ENCODE measurements at regions of chr2 and their contacts with region 1.

Region 1: DNA sequence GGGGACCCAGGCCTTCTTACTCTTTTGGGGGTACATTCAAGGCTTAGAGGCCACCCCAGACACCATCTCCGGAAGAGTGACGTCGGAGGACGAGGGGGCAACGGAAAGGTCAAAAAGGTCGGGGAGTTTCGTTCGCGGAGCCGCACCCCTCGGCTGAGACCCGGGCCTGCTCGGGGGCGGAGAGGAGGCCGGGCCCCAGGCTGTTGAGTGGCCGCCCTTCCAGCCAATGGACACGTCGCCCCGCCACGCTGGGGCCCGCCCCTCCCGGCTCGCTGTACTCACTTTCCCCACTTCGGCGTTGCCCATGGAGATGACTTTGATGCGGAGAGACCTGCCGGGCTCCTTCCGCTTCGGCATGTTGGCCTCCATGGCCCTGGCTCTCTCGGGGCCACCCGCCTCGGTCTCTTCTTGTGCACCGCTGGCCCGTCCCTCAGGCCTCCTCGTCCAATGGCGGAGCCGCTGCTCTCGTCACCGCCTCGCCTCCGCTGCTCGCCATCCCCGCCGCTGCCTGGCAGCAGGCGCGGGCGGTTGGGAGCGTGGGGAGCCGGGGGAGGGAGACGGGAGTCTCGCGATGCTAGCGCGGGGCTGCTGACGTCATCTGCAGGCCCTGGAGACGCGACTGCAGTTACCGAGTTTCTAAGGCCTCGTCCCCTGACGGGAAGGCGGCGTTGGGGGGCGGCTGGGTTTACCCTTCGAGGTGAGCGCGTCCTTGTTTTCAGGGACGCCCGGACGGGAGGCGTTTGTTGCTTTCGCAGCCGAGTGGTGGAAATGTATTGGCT is at the start of gene DNAJC27:
- DNase-seq: peak; percentile 98
- ATAC-seq: peak; percentile 94
- H3K4me3 Mint-ChIP-seq: peak within 1 kb of the TSS; percentile 98
- H3K27ac Mint-ChIP-seq: peak within 1 kb of the TSS; percentile 100
- H3K4me1 Mint-ChIP-seq: peaks cover 19% of the 10 kb centered on the region
- H3K27me3 Mint-ChIP-seq: no peaks in the 10 kb centered on the region
- total RNA-seq, gene DNAJC27: 6.5 to 8.0 TPM

Region 2: DNA sequence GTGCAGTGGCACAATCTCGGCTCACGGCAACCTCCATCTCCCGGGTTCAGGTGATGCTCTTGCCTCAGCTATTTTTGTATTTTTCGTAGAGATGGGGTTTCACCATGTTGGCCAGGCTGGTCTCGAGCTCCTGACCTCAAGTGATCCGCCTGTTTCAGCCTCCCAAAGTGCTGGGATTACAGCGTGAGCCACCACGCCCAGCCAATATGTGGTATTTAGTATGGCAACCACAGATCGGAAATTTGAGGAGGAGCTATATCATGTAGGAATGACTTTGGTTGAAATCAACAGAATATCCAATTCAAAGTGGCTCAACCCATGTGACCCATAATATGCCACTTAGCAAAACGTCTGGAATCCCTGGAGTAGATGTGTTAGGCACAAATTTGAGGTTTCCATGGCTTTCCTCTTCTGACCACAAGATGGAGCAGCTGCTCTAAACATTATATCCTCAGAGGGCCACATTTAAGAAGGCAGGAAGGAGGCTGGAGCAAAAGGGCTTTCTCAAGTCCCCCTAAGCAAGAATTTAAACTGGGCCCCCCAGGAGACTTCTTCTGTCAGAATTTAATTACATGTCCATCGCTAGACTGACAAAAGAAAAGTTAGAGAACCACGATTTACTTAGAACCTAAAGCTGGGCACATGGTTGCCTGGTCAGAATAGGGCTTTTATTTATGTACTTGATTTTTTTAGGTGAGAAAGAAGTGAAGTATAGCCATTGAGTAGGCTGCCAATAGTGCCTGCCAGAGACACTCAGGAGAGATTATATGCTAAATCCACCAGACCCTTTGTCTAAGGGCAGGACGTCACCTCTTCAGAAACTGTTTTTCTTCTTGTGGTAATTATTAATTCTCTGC is 561.8 kb before region 1 on chr2:
- CTCF ChIA-PET with region 1: interaction called, 13 read pairs
- POLR2A ChIA-PET with region 1: no interaction called
- DNase-seq: peak; percentile 60
- ATAC-seq: peak; percentile 84
- H3K4me3 Mint-ChIP-seq: no peak overlapping the region
- H3K27ac Mint-ChIP-seq: no peak overlapping the region
- H3K4me1 Mint-ChIP-seq: no peaks in the 10 kb centered on the region
- H3K27me3 Mint-ChIP-seq: peaks cover 3% of the 10 kb centered on the region

Region 3: GRCh38 chr2:24984912-24985311 is 13.2 kb after region 1 on chr2:
- CTCF ChIA-PET with region 1: interaction called, 13 read pairs
- POLR2A ChIA-PET with region 1: no interaction called
- DNase-seq: no peak
- ATAC-seq: no peak
- H3K4me3 Mint-ChIP-seq: no peak overlapping the region
- H3K27ac Mint-ChIP-seq: no peak overlapping the region
- H3K4me1 Mint-ChIP-seq: no peaks in the 10 kb centered on the region
- H3K27me3 Mint-ChIP-seq: peaks cover 13% of the 10 kb centered on the region

Region 4: DNA sequence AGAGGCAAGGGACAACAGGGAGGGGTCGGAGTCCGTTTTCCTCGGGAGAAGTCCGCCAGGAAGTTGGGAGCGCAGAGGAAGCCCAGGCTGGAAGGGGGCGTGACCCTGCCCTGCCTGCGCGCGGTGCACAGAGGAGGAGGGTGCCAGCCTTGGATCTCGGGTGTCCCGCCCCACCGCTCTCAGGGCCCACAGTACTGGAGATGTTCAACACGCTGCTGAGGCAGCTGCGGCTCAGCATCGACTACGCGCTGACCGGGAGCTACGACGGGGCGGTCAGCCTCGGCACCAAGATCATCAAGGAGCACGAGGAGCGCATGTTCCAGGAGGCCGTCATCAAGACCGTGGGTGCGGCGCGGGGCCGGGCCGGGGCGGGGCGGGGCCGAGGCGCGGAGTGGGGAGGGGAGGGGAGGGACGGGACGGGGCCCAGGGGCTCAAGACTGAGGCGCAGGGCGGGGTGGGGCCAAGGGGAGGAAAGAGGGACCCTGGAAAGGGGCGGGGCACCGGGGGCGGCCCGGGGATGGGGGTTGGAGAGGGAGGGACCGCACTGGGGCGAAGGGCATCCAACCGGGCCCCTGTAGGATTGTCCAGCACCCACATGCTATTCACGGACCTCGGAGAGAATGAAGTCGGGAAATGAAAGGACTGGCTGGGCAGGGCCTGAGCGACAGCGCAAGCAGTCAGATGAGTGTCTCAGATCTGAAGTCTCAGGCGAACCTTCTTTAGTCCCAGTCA is 160.0 kb after region 1 on chr2:
- CTCF ChIA-PET with region 1: interaction called, 180 read pairs
- POLR2A ChIA-PET with region 1: interaction called, 7 read pairs
- DNase-seq: no peak
- ATAC-seq: peak; percentile 29
- H3K4me3 Mint-ChIP-seq: peak overlapping the region; percentile 44
- H3K27ac Mint-ChIP-seq: no peak overlapping the region
- H3K4me1 Mint-ChIP-seq: peaks cover 7% of the 10 kb centered on the region
- H3K27me3 Mint-ChIP-seq: peaks cover 52% of the 10 kb centered on the region

Region 5: GRCh38 chr2:25165992-25166875 is 194.5 kb after region 1 on chr2:
- CTCF ChIA-PET with region 1: interaction called, 17 read pairs
- POLR2A ChIA-PET with region 1: interaction called, 3 read pairs
- DNase-seq: peak; percentile 70
- ATAC-seq: peak; percentile 68
- H3K4me3 Mint-ChIP-seq: no peak overlapping the region
- H3K27ac Mint-ChIP-seq: no peak overlapping the region
- H3K4me1 Mint-ChIP-seq: peaks cover 27% of the 10 kb centered on the region
- H3K27me3 Mint-ChIP-seq: peaks cover 47% of the 10 kb centered on the region

Region 6: GRCh38 chr2:25197336-25198208 is 225.8 kb after region 1 on chr2:
- CTCF ChIA-PET with region 1: interaction called, 39 read pairs
- POLR2A ChIA-PET with region 1: no interaction called
- DNase-seq: no peak
- ATAC-seq: no peak
- H3K4me3 Mint-ChIP-seq: no peak overlapping the region
- H3K27ac Mint-ChIP-seq: no peak overlapping the region
- H3K4me1 Mint-ChIP-seq: peaks cover 13% of the 10 kb centered on the region
- H3K27me3 Mint-ChIP-seq: peaks cover 5% of the 10 kb centered on the region

Region 7: DNA sequence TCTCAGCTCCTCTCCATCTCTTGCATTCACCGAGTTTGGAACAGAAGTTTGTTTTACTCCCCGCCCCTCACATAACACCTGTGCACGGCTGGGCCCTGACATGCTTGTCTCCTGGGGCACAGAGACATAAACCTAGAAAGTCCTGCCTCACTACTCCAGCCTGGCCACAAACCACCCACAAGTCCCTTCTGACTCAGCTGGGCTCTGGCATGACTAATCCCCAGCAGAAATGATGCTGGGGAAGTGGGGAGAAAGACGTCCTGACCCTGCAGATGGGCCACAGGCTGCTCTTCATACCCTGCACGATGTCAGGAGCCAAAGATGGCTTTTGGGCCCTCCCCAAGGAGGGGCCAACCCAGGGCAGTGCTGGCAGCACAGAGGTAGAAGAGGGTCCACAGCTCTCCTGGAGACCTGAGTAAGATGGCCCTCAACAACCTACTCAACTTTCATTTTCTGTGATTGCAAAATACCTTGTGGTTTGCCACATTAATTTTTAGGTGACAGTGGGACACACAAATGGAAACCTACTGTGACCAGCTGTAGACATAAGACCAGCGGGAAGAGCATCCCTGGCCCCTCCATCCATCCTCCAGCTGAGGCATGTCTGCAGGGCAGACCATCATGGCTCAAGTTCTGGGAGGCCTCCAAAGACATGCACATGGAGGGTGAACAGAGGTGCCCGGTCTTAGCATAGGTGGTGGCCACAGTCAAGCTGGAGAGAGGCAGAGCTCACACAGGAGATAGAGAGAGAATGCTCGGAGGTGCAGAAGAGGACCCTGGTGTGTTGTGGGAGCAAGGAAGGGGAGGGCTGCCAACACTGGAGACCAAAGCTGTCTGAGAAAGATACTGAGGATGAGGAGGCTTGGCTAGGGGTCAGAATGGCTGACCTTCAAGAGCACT is 330.0 kb after region 1 on chr2:
- CTCF ChIA-PET with region 1: no interaction called
- POLR2A ChIA-PET with region 1: no interaction called
- DNase-seq: peak; percentile 86
- ATAC-seq: peak; percentile 89
- H3K4me3 Mint-ChIP-seq: peak overlapping the region; percentile 27
- H3K27ac Mint-ChIP-seq: peak overlapping the region; percentile 88
- H3K4me1 Mint-ChIP-seq: peaks cover 90% of the 10 kb centered on the region
- H3K27me3 Mint-ChIP-seq: no peaks in the 10 kb centered on the region

Measured in activated CD8-positive, alpha-beta T cell treated with anti-CD3 and anti-CD28 coated beads, Interleukin-2, amount 10 ng/mL, durations not matched to agents 7 days and 5 days (primary cell).